ENCODE measurements at regions of chr6 and their contacts with region 1.

Region 1: DNA sequence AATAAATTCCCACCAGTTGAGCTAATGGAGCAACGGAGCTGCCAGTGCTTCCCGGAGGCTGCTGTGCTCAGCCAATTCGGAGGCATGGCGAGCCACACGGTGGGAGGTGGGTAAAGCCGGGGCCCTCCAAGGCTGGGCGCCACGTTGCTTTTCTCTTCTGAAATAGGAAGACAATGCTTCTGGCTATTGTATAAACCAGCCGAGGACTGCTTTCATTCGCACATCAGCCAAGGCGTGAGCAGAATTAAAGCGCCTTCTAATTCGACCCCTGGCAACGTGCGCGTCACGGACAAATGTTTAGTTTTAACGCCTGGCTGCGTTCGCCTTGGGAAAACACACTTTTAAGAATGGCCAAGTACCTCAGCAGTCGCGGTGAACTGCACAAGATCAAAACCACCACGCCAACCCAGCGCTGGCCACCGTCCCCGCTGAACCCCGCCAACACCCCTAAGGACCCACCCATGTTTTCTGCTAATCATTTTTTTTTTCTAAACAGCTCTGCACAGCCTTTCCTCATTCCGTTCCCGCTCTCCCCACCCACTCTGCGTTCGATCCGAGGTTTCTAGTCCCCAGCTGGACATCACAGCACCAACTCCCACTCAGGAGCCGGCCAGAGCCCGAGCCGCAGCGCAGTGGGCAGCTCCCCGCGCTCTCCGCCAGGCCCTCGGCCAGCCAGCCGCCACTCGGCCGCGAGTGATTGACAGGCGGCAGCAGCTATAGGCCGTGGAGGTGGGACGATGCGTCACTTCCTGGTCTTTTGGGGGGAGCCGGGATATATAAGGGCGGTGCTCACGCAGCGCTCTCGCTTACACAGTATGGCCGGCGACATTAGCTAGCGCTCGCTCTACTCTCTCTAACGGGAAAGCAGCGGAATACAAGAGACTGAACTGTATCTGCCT is at the start of gene AMD1:
- DNase-seq: peak; percentile 90 to 98 (median 94)
- ATAC-seq: peak; percentile 82
- H3K4me3 ChIP-seq: peak within 1 kb of the TSS; percentile 84
- H3K27ac ChIP-seq: peak within 1 kb of the TSS; percentile 90
- H3K4me1 ChIP-seq: peaks cover 15 to 18% of the 10 kb centered on the region in 2 experiments; a peak in 4 of 5 replicates
- H3K27me3 ChIP-seq: no peaks in the 10 kb centered on the region
- CTCF ChIP-seq: 0 out of 6 replicates have a peak, but pooled peaks of 1 of the 3 experiments have one; percentile 5
- EP300 ChIP-seq: no peak
- POLR2A ChIP-seq: peak; percentile 100
- RAD21 ChIP-seq: peak in 1 of 2 experiments; percentile 32; a peak in 1 of 4 replicates
- polyA plus RNA-seq, gene AMD1: 82.1 to 85.6 TPM

Region 2: DNA sequence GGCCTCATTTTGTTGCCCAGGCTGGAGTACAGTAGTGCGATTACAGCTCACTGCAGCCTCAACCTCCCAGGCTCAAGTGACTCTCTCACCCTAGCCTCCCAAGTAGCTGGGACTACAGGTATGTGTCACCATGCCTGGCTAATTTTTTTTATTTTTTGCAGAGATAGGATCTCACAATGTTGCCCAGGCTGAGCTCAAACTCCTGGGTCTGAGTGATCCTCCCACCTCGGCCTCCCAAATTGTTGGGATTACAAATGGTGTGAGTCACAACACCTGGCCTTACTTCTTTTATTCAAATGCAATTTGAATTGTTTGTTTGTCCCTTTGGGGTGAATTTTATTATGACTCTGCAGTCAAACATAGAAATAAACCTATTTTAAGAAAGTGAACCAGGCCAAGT is 266.1 kb before region 1 on chr6:
- CTCF ChIA-PET with region 1: no interaction called
- POLR2A ChIA-PET with region 1: no interaction called
- in situ Hi-C with region 1: no loop called
- intact Hi-C with region 1: no loop called
- DNase-seq: no peak
- ATAC-seq: no peak
- H3K4me3 ChIP-seq: no peak overlapping the region
- H3K27ac ChIP-seq: no peak overlapping the region
- H3K4me1 ChIP-seq: no peaks in the 10 kb centered on the region
- H3K27me3 ChIP-seq: no peaks in the 10 kb centered on the region
- CTCF ChIP-seq: no peak
- EP300 ChIP-seq: no peak
- POLR2A ChIP-seq: no peak
- RAD21 ChIP-seq: no peak

Region 3: DNA sequence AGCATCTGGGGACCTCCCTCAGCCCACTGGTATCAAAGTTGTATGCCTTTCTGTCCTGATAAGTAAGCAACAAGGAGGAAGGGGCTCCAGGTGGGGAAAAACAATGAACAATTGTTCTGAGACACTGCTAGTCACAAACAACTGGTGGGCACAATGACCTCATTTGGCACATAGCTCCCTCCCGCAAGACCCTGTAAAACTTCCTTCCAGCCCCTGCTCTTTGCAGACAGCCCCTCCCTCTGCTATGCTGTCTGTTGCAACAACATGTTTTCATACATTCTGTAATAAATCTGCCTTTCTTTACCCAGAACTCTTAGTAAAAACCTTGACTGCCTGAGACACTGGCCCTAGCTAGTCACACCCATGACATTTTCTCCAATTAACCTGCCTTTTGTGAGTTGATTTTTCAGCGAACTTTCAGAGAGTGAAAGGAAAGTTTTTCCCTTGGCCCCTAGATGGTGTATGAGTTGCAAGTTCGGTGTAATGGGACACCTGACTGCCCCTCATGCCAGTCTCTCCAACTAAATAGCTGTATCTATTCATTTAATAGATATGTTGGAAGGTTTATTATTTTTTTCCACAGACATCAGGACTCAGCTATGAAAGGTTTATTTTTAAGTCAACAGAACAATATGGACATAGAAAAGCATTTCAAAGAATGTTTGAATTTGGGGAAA is 255.5 kb before region 1 on chr6:
- CTCF ChIA-PET with region 1: no interaction called
- POLR2A ChIA-PET with region 1: no interaction called
- in situ Hi-C with region 1: no loop called
- intact Hi-C with region 1: loop called (anchors 1 kb)
- DNase-seq: peak in 1 of 4 experiments; percentile 21
- ATAC-seq: peak; percentile 83
- H3K4me3 ChIP-seq: no peak overlapping the region
- H3K27ac ChIP-seq: no peak overlapping the region
- H3K4me1 ChIP-seq: peaks cover 13 to 30% of the 10 kb centered on the region in 2 experiments; a peak in 4 of 5 replicates
- H3K27me3 ChIP-seq: no peaks in the 10 kb centered on the region
- CTCF ChIP-seq: peak in 1 of 3 experiments; percentile 53; a peak in 3 of 6 replicates
- EP300 ChIP-seq: no peak
- POLR2A ChIP-seq: no peak
- RAD21 ChIP-seq: peak; percentile 27 to 44; a peak in 2 of 4 replicates

Region 4: DNA sequence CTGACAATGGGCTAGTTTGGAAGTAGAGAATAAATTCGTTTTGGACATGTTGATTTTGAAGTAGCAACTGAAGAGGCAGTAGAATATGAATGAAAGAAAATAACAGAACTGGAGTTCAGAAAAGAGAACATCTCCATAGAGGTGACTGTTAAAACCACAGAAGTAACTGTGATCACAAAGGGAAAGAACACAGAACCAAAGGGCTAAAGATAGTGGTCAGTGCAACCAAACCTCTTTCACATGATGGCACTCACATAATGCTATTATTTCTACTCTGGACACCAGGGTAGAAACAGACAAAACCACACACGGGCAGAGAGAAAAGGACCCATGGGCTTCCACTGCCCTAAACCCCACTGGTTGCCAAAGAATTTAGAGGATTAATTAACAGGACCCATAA is 117.4 kb before region 1 on chr6:
- CTCF ChIA-PET with region 1: no interaction called
- POLR2A ChIA-PET with region 1: interaction called, 5 read pairs
- in situ Hi-C with region 1: no loop called
- intact Hi-C with region 1: loop called (anchors 5 kb)
- DNase-seq: no peak
- ATAC-seq: no peak
- H3K4me3 ChIP-seq: no peak overlapping the region
- H3K27ac ChIP-seq: no peak overlapping the region
- H3K4me1 ChIP-seq: no peaks in the 10 kb centered on the region; a peak in 1 of 5 replicates
- H3K27me3 ChIP-seq: peaks cover 0 to 4% of the 10 kb centered on the region in 2 experiments; a peak in 1 of 5 replicates
- CTCF ChIP-seq: no peak
- EP300 ChIP-seq: no peak
- POLR2A ChIP-seq: no peak
- RAD21 ChIP-seq: no peak

Region 5: GRCh38 chr6:110890288-110890687 is 16.1 kb after region 1 on chr6:
- CTCF ChIA-PET with region 1: no interaction called
- POLR2A ChIA-PET with region 1: interaction called, 96 read pairs
- in situ Hi-C with region 1: no loop called
- intact Hi-C with region 1: no loop called
- DNase-seq: no peak
- ATAC-seq: no peak
- H3K4me3 ChIP-seq: no peak overlapping the region
- H3K27ac ChIP-seq: no peak overlapping the region
- H3K4me1 ChIP-seq: no peaks in the 10 kb centered on the region; a peak in 1 of 5 replicates
- H3K27me3 ChIP-seq: no peaks in the 10 kb centered on the region
- CTCF ChIP-seq: no peak
- EP300 ChIP-seq: no peak
- POLR2A ChIP-seq: no peak
- RAD21 ChIP-seq: no peak

Region 6: GRCh38 chr6:110949679-110950285 is 75.6 kb after region 1 on chr6:
- CTCF ChIA-PET with region 1: no interaction called
- POLR2A ChIA-PET with region 1: interaction called, 13 read pairs
- in situ Hi-C with region 1: no loop called
- intact Hi-C with region 1: no loop called
- DNase-seq: peak in 1 of 4 experiments; percentile 32
- ATAC-seq: no peak
- H3K4me3 ChIP-seq: no peak overlapping the region
- H3K27ac ChIP-seq: no peak overlapping the region
- H3K4me1 ChIP-seq: no peaks in the 10 kb centered on the region; a peak in 2 of 5 replicates
- H3K27me3 ChIP-seq: no peaks in the 10 kb centered on the region
- CTCF ChIP-seq: peak; percentile 46 to 76 (median 57); a peak in 5 of 6 replicates
- EP300 ChIP-seq: no peak
- POLR2A ChIP-seq: no peak
- RAD21 ChIP-seq: peak; percentile 41 to 70

Region 7: GRCh38 chr6:110999634-111000270 is 125.5 kb after region 1 on chr6:
- CTCF ChIA-PET with region 1: no interaction called
- POLR2A ChIA-PET with region 1: interaction called, 5 read pairs
- in situ Hi-C with region 1: no loop called
- intact Hi-C with region 1: loop called (anchors 5 kb)
- DNase-seq: peak in 1 of 4 experiments; percentile 11
- ATAC-seq: peak; percentile 62
- H3K4me3 ChIP-seq: no peak overlapping the region
- H3K27ac ChIP-seq: no peak overlapping the region
- H3K4me1 ChIP-seq: no peaks in the 10 kb centered on the region; a peak in 1 of 5 replicates
- H3K27me3 ChIP-seq: no peaks in the 10 kb centered on the region
- CTCF ChIP-seq: peak in 1 of 3 experiments; percentile 52; a peak in 2 of 6 replicates
- EP300 ChIP-seq: no peak
- POLR2A ChIP-seq: no peak
- RAD21 ChIP-seq: peak; percentile 70 to 71

Region 8: DNA sequence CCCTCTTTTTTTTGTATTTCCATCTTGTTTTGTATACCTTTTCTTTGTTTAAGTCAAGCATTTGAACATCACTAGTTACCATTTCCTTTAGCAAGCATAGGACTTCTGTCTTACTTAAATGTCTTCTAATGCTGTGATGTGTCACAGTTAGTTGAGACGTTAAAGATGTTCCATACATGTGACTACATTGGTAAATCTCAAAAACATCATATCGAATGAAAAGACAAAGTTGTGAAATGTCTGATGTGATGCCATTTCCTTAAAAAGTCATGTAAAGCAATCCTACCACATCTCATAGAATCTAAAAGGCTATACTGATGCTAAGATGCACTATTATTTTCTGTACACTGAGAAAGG is 239.8 kb after region 1 on chr6:
- CTCF ChIA-PET with region 1: no interaction called
- POLR2A ChIA-PET with region 1: no interaction called
- in situ Hi-C with region 1: no loop called
- intact Hi-C with region 1: no loop called
- DNase-seq: no peak
- ATAC-seq: no peak
- H3K4me3 ChIP-seq: no peak overlapping the region
- H3K27ac ChIP-seq: no peak overlapping the region
- H3K4me1 ChIP-seq: no peaks in the 10 kb centered on the region; a peak in 1 of 5 replicates
- H3K27me3 ChIP-seq: peaks cover 4 to 11% of the 10 kb centered on the region in 2 experiments; a peak in 4 of 5 replicates
- CTCF ChIP-seq: no peak
- EP300 ChIP-seq: no peak
- POLR2A ChIP-seq: no peak
- RAD21 ChIP-seq: no peak